ENCODE measurements at regions of chr5 and their contacts with region 1.

Region 1: GRCh38 chr5:80837679-80838078 is 122.5 kb upstream of the RASGRF2 start:
- DNase-seq: peak; percentile 27
- H3K4me3 Mint-ChIP-seq: no peak overlapping the region
- H3K27ac Mint-ChIP-seq: no peak overlapping the region
- H3K4me1 Mint-ChIP-seq: peaks cover 35% of the 10 kb centered on the region
- H3K27me3 Mint-ChIP-seq: no peaks in the 10 kb centered on the region

Region 2: DNA sequence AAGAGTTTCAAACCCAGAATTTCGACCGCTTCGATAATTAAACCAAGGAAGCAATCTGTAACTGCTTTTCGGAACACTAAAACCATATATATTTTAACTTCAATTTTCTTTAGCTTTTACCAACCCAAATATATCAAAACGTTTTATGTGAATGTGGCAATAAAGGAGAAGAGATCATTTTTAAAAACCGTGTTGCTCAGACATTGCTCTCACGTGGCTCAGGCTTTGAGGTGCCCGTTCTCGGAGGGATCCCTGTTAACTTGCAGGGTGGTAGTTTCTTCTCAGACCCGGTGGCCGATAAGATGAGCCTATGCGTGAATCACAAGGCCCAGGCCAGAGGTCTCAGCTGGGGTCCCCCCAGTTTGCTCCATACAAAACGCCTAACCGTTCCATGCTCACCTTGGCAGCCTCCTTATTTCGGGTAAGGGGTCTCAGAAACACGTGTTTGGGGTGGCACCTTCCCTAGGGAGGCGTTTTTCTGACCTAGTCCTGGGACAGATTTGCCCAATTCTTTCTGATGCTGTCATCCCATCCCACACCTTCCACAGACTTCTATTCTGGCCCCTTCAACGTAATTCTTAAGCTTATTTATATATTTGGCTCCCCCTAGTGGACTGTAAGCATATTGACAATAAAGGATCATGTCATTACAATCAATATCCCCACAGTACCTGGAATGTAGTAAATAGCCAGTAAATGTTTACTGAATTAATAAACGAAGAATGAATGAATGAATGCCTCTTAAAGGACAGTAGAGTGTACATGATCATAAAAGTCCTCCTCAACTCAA is 754.4 kb before region 1 on chr5:
- intact Hi-C with region 1: no loop called
- DNase-seq: no peak
- H3K4me3 Mint-ChIP-seq: peak overlapping the region; percentile 83
- H3K27ac Mint-ChIP-seq: peak overlapping the region; percentile 93
- H3K4me1 Mint-ChIP-seq: peaks cover 19% of the 10 kb centered on the region
- H3K27me3 Mint-ChIP-seq: peaks cover 4% of the 10 kb centered on the region

Region 3: GRCh38 chr5:80864706-80865435 is 27.2 kb after region 1 on chr5:
- intact Hi-C with region 1: loop called (anchors 2 kb)
- DNase-seq: no peak
- H3K4me3 Mint-ChIP-seq: peak overlapping the region; percentile 3
- H3K27ac Mint-ChIP-seq: peak overlapping the region; percentile 38
- H3K4me1 Mint-ChIP-seq: peaks cover 65% of the 10 kb centered on the region
- H3K27me3 Mint-ChIP-seq: no peaks in the 10 kb centered on the region